ENCODE measurements at regions of chr10 and their contacts with region 1.

Region 1: DNA sequence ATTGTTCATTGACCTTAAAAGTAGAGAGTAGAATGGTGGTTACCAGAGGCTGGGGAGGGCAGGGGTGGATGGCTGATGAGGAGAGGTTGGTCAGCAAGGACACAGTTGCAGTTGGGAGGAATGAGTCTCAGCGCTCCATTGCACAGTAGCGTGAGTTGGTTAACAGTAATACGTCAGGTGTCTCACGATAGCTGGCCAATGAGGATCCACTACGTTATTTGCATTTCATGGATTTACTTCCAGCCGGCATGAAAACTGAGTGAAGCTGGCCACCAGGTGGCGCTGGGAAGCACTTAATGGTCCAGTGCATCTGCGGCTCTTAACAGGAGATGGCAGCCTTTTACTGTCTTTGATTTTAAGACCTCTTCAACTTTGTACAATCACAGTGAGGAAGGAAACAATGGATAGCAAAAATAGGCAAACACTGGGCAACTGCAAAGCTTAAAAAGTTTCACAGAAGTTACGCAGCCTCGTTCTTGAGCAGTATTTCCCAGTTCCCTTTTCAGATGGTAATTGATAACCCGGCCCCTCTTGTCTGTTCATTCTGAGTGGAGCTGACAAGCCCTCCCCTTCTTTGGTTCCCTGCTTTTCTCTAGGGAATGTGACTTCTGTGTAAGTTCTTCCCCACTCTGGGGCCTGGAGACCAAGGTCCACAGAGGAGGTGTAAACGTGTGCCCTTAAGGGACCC is 23.7 kb downstream of the AKR1E2 start:
- DNase-seq: peak; percentile 84
- H3K4me3 ChIP-seq: no peak overlapping the region
- H3K27ac ChIP-seq: no peak overlapping the region
- H3K4me1 ChIP-seq: no peaks in the 10 kb centered on the region
- CTCF ChIP-seq: peak; percentile 99

Region 2: DNA sequence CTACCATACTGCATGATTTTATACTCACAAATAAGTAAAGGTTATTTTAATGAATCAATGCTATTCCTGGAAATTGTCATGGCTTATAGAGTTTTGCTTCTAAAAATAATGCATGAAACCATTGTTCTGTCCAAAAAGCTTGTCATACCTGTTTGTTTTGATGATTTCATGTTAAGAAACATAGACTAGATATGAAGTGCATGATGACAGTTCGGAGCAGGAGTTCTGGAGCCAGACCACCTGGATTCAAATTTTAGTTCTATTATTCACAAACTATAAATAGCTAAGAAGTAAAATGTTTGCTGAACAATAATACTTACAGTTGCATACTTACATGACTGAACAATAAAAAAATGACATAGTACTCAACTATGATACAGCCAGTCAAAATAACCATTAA is 130.7 kb before region 1 on chr10:
- CTCF ChIA-PET with region 1: no interaction called
- POLR2A ChIA-PET with region 1: no interaction called
- intact Hi-C with region 1: no loop called
- DNase-seq: no peak
- H3K4me3 ChIP-seq: no peak overlapping the region
- H3K27ac ChIP-seq: no peak overlapping the region
- H3K4me1 ChIP-seq: no peaks in the 10 kb centered on the region
- CTCF ChIP-seq: no peak

Region 3: GRCh38 chr10:5283305-5284158 is 433.8 kb after region 1 on chr10:
- CTCF ChIA-PET with region 1: no interaction called
- POLR2A ChIA-PET with region 1: no interaction called
- intact Hi-C with region 1: loop called (anchors 5 kb)
- DNase-seq: peak; percentile 39
- H3K4me3 ChIP-seq: no peak overlapping the region
- H3K27ac ChIP-seq: no peak overlapping the region
- H3K4me1 ChIP-seq: no peaks in the 10 kb centered on the region
- CTCF ChIP-seq: peak; percentile 79

Region 4: DNA sequence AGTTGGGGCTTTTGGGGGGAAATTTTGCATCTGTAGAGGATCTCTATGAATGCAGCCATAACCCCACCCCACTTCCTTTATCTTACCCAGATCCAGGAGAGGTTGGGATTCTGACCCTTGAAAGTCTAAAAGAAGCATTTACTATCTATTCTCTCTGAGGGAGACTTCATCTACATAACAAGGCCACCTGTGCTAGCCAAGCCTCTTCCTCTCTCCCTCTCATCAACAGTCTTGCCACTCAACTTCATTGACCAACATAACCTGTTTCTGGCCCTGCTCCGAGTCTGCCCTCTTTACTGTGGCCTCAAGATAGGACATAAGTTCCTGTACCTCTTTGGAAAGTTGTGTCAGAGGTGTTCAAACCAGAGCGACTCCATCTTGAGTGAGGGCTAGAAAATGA is 535.5 kb after region 1 on chr10:
- CTCF ChIA-PET with region 1: no interaction called
- POLR2A ChIA-PET with region 1: no interaction called
- intact Hi-C with region 1: loop called (anchors 5 kb)
- DNase-seq: no peak
- H3K4me3 ChIP-seq: no peak overlapping the region
- H3K27ac ChIP-seq: no peak overlapping the region
- H3K4me1 ChIP-seq: no peaks in the 10 kb centered on the region
- CTCF ChIP-seq: no peak

Region 5: DNA sequence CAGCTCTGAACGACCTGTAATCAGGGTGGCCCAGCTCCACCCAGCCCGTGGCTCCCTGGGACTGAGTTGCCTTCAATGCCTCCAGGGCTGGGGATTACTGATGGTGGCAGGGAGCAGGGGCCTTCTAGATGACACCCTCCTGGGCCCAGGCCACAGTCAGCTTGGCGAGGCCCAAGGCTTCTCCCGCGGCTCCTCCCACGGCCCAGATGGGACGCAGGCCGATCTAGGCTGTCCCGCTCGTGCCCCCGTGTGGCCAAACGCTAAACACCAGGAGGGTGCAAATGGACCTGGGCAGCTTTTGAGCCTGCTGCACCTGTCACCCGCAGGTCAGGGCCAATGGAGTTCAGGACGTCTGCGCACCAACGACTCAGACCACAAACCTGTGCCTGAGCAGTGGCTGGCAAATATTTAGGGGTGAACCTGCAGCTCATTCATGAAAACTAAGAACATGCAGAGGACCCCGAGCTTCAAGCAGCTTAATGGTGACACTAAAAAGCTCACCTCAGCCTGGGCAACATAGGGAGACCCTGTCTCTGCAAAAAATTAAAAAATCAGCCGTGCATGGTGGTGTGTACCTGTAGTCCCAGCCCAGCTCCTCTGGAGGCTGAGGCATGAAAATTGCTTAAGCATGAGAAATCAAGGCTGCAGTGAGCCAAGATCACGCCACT is 773.5 kb after region 1 on chr10:
- CTCF ChIA-PET with region 1: no interaction called
- POLR2A ChIA-PET with region 1: no interaction called
- intact Hi-C with region 1: loop called (anchors 1 kb)
- DNase-seq: peak; percentile 89
- H3K4me3 ChIP-seq: no peak overlapping the region
- H3K27ac ChIP-seq: no peak overlapping the region
- H3K4me1 ChIP-seq: peaks cover 6% of the 10 kb centered on the region
- CTCF ChIP-seq: peak; percentile 95